GM12878 (cell line): ENCODE measurements at regions of chr17 and their contacts with region 1.

Region 1: GRCh38 chr17:57892146-57892828 is 42.4 kb upstream of the MRPS23 start:
- DNase-seq: no peak
- ATAC-seq: peak; percentile 91
- H3K4me3 ChIP-seq: no peak overlapping the region
- H3K27ac ChIP-seq: no peak overlapping the region
- H3K4me1 ChIP-seq: peaks cover 19% of the 10 kb centered on the region
- H3K27me3 ChIP-seq: no peaks in the 10 kb centered on the region
- CTCF ChIP-seq: peak; percentile 91 to 99 (median 99)
- EP300 ChIP-seq: no peak
- POLR2A ChIP-seq: no peak
- RAD21 ChIP-seq: peak; percentile 88

Region 2: DNA sequence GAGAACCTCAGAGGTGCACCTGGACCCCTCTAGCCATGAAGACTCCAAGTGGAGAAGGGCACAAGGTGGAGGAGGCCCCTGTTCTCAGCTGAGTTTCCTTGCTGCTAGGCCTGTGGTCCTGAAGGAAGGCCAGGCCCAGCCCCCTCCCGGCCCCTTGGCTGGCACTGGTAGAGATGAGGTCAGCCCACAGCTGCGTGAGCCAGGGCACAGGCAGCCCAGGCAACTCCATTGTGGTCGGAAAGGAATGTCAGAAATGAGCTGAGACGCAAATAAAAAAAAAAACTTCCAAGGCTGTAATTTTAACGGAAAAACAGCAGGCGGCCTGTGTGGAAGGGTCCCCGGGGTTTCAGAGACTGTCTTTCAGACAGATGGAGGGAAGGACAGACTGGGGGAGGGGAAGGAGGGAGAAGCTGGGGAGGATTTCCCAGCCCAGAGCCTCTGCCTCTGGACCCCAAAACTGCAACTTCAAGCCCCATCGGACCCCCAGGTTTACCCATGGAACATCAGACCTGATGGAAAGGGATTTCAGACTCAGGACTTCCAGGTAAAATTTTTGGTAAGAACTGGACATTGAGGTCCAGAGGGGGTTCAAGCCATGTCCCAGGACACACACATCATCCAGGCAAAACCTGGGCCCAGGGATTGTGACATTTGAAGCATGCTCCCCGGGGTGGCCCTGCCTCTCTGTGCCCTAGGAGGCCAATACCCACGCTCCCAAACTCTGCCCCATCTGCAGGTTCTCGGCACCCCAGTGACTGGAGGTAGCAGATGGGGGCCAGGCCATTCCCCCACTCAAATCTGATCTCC is 16.8 kb before region 1 on chr17:
- CTCF ChIA-PET with region 1: interaction called, 23 read pairs
- POLR2A ChIA-PET with region 1: no interaction called
- RAD21 ChIA-PET with region 1: interaction called, 3 read pairs
- SMC1A ChIA-PET with region 1: interaction called, 3 read pairs
- in situ Hi-C with region 1: no loop called
- intact Hi-C with region 1: no loop called
- DNase-seq: no peak
- ATAC-seq: no peak
- H3K4me3 ChIP-seq: no peak overlapping the region
- H3K27ac ChIP-seq: no peak overlapping the region
- H3K4me1 ChIP-seq: peaks cover 8% of the 10 kb centered on the region
- H3K27me3 ChIP-seq: peaks cover 0 to 1% of the 10 kb centered on the region in 2 experiments; a peak in 2 of 4 replicates
- CTCF ChIP-seq: no peak
- EP300 ChIP-seq: no peak
- POLR2A ChIP-seq: no peak
- RAD21 ChIP-seq: 0 out of 2 replicates have a peak, but pooled peaks have one; percentile 5

Region 3: DNA sequence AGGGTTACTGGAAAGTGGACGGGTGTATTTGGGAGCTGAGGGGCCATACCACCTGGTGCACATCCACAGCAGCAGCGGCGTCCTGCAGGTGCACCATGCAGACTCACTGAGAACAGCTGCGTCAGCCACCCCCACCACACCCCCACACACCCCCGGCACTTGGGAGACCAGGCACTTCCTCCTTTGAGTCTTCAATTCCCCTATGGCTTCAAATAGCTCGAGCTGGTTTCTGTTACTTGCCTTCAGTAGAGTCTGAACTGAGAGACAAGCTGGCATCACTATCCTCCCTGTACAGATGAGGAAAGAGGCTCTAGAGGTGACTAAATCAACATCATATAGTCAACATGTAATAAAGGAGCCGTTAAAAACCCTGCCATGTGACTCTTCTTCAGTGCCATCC is 47.5 kb after region 1 on chr17:
- CTCF ChIA-PET with region 1: interaction called, 17 read pairs
- POLR2A ChIA-PET with region 1: no interaction called
- RAD21 ChIA-PET with region 1: interaction called, 3 read pairs
- SMC1A ChIA-PET with region 1: interaction called, 4 read pairs
- in situ Hi-C with region 1: no loop called
- intact Hi-C with region 1: no loop called
- DNase-seq: peak; percentile 75
- ATAC-seq: peak; percentile 87
- H3K4me3 ChIP-seq: no peak overlapping the region; the same call in 1 of the 2 replicates
- H3K27ac ChIP-seq: no peak overlapping the region
- H3K4me1 ChIP-seq: peaks cover 45% of the 10 kb centered on the region
- H3K27me3 ChIP-seq: no peaks in the 10 kb centered on the region
- CTCF ChIP-seq: no peak
- EP300 ChIP-seq: peak; percentile 66; a peak in 2 of 4 replicates
- POLR2A ChIP-seq: no peak
- RAD21 ChIP-seq: no peak

Region 4: DNA sequence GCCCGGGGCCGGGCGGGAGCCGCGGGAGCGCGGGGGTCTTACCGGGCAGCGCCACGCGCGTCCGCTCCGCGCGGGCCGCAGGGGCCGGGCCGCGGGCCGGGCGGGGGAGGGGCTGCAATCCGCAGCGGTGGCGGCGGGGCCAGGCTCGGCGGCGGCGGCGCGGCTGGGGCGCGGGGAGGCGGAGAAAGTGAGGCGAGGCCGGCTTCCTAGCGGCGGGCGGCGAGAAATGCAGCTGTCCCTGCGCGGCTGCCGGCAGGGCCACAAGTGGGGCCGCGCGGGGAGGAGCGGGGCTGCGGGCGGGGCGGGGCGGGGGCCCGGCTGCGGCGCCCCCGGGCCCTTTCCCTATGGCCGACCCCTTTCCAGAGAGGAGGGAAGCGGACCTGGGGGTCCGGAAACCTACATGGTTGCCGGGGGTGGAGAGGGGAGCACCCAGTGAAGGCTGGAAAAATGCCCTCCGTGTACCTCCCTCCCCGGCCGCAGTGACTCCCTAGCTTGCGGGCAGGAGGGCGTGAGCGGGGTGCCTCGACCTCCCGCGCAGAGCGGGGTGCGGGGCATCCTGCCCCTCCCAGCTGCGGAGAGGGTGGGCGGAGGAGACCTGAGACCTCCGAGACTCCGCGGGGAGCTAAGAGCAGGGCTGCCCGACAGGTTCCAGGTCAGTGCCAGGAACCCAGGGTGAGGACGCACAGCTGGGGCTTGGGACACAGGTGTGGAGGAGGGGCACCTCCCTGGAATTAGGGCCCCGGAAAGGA is 63.1 kb after region 1 on chr17 and contains the start of gene CUEDC1:
- CTCF ChIA-PET with region 1: interaction called, 15 read pairs
- POLR2A ChIA-PET with region 1: no interaction called
- RAD21 ChIA-PET with region 1: interaction called, 7 read pairs
- SMC1A ChIA-PET with region 1: interaction called, 8 read pairs
- in situ Hi-C with region 1: no loop called
- intact Hi-C with region 1: no loop called
- DNase-seq: no peak
- ATAC-seq: peak; percentile 79
- H3K4me3 ChIP-seq: peak within 1 kb of the TSS; percentile 74
- H3K27ac ChIP-seq: no peak within 1 kb of the TSS
- H3K4me1 ChIP-seq: peaks cover 23% of the 10 kb centered on the region
- H3K27me3 ChIP-seq: peaks cover 0 to 2% of the 10 kb centered on the region in 2 experiments; a peak in 2 of 4 replicates
- CTCF ChIP-seq: peak in 2 of 3 experiments; percentile 27 to 29; a peak in 2 of 6 replicates
- EP300 ChIP-seq: no peak
- POLR2A ChIP-seq: no peak
- RAD21 ChIP-seq: no peak
- polyA plus RNA-seq, gene CUEDC1: 0.24 to 0.80 TPM

Region 5: DNA sequence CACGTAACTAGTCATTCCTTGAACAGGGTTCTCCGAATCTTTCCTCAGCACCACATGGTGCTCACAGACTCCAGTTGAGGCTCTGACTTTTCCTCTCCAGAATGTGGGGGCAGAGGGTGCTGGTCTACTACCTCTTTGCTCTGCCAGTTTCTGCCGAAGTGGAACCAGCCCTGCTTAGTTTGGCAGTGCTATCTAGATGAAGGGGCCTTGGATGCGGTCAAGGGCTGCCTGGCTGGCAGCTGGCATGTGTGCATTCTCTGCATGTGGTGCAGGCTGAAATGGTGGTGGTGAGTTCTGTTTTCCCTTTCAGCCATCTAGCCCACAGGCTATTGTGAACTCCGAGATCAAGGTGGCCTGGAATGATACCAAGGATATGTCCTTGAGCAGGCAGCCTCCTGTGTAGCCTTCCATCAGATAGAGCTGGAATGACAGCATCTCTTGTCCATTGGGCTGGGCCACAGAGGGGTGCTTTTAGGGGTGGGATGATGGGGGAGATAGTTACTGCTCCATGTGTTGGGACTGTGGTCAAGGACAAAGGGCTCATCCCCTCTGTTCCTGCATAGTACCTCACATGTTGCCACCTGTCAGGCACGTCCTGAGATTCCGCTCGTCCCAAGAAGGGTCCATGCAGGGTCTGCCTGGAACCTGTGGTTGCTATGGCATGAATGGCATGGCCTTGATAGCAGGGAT is 192.9 kb after region 1 on chr17:
- CTCF ChIA-PET with region 1: no interaction called
- POLR2A ChIA-PET with region 1: no interaction called
- RAD21 ChIA-PET with region 1: no interaction called
- SMC1A ChIA-PET with region 1: no interaction called
- in situ Hi-C with region 1: no loop called
- intact Hi-C with region 1: no loop called
- DNase-seq: no peak
- ATAC-seq: no peak
- H3K4me3 ChIP-seq: peak overlapping the region; percentile 78
- H3K27ac ChIP-seq: no peak overlapping the region
- H3K4me1 ChIP-seq: peaks cover 15% of the 10 kb centered on the region
- H3K27me3 ChIP-seq: no peaks in the 10 kb centered on the region
- CTCF ChIP-seq: no peak
- EP300 ChIP-seq: no peak
- POLR2A ChIP-seq: no peak
- RAD21 ChIP-seq: no peak